Adrenal gland (tissue), 19 donors: ENCODE measurements at regions of chr1 and their contacts with region 1.

Region 1: GRCh38 chr1:37676281-37677243 is 15.8 kb upstream of the CDCA8 start:
- DNase-seq: no peak
- H3K4me3 ChIP-seq: no peak overlapping the region
- H3K27ac ChIP-seq: no peak overlapping the region
- H3K4me1 ChIP-seq: peaks cover 0 to 3% of the 10 kb centered on the region in 2 donors
- H3K27me3 ChIP-seq: no peaks in the 10 kb centered on the region
- CTCF ChIP-seq: no peak
- POLR2A ChIP-seq: no peak

Region 2: GRCh38 chr1:37449936-37450335 is 226.6 kb before region 1 on chr1:
- intact Hi-C with region 1: loop called (anchors 5 to 10 kb)
- DNase-seq: no peak
- H3K4me3 ChIP-seq: no peak overlapping the region
- H3K27ac ChIP-seq: no peak overlapping the region
- H3K4me1 ChIP-seq: peaks cover 0 to 4% of the 10 kb centered on the region in 2 donors
- H3K27me3 ChIP-seq: no peaks in the 10 kb centered on the region
- CTCF ChIP-seq: no peak
- POLR2A ChIP-seq: no peak

Region 3: DNA sequence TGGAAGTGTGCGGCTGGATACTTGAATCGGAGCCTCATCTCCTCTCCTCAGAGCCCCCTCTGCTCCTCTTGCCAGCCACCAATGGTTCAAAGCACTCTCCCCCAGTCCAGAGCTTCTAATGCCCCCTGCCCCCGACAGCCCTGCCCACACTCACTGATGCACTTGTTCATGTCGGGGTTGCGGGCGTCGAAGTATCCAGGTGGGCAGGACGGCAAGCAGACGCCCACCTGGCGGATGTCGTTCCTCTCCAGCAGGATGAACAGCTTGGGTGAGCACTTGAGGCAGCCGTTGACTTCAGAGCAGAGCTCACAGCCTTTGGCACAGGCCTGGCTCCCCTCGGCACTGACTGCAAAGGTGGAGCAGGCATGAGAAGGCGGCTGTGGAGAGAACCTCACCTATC is 60.2 kb before region 1 on chr1:
- intact Hi-C with region 1: loop called in 1 of 2 experiments (anchors 5 kb)
- DNase-seq: no peak
- H3K4me3 ChIP-seq: no peak overlapping the region
- H3K27ac ChIP-seq: no peak overlapping the region
- H3K4me1 ChIP-seq: no peaks in the 10 kb centered on the region
- H3K27me3 ChIP-seq: peaks cover 12% of the 10 kb centered on the region
- CTCF ChIP-seq: no peak
- POLR2A ChIP-seq: no peak